ENCODE measurements at regions of chr2 and their contacts with region 1.

Region 1: DNA sequence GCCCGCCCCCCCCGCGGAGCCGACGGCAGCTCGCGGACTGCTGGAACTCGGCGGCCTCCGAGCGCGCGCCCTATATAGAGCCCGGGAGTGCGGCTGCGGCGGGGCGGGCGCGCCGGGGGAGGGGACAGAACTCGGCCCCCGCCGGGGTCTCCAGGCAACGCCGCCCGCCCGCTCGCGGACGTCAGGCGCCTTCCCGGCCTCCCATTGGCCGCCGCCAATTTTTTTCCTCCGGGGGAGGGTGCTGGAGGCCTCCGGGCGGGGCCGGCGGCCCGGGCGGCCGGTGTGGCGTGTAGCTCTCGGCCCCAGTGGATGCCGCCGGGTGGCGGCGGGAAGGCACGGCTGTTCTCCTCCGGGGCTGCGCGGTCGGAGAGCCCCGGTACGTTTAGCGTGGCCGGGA is at the start of gene ZFP36L2:
- DNase-seq: peak; percentile 93 to 98
- H3K4me3 ChIP-seq: peak within 1 kb of the TSS; percentile 87 to 89
- H3K27ac ChIP-seq: peak within 1 kb of the TSS; percentile 96 to 99
- H3K4me1 ChIP-seq: peaks cover 0 to 38% (median 23%) of the 10 kb centered on the region in 4 donors
- H3K27me3 ChIP-seq: no peaks in the 10 kb centered on the region
- CTCF ChIP-seq: no peak

Region 2: DNA sequence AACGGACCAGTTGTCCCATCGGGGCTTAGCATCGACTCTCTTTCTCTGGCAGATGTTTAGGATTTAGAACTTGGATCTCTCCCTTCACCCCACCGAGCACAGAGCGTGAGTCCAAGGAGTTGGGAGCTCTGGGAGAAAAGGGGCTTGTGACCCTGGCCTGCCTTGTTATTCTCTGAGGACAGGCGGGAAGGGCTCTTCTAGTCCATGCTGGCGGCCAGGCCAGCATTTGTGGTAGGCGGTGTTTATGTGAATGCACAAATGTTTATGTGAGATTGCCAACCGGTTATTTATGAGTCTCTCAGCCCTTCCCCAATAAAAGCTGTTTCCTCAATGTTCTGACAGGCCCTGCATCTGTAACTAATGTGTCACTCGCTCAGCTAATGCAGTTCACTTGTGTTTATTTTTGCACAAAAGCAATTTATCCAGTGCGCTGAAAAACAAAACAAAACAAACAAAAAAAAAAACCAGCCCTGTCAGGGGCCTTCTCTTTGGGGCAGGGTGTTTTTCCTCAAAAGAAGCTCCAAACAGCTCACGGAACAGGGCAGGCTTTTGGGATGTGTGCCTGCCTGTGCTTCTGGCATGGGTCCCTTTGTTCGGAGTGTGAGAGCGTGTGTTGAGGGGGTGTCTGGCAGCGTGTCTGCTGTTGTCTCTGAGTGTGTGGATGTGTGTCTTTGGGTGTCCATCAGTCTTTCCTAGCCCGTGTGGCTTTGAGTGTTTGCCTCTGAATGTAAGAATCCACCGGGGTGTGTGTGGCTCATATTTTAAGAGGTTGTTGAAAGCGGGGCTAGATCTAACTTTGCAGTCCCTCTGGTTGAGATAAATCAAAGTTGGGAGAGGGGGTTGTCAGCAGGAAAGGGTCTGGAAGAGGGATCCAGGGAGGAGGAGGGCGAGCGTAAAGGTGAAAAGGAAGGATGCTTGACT is 381.4 kb before region 1 on chr2:
- intact Hi-C with region 1: loop called (anchors 5 kb)
- DNase-seq: peak in 1 of 2 donors; percentile 68
- H3K4me3 ChIP-seq: no peak overlapping the region
- H3K27ac ChIP-seq: peak overlapping the region; percentile 72 to 78
- H3K4me1 ChIP-seq: peaks cover 6 to 94% (median 78%) of the 10 kb centered on the region in 4 donors
- H3K27me3 ChIP-seq: no peaks in the 10 kb centered on the region
- CTCF ChIP-seq: no peak

Region 3: DNA sequence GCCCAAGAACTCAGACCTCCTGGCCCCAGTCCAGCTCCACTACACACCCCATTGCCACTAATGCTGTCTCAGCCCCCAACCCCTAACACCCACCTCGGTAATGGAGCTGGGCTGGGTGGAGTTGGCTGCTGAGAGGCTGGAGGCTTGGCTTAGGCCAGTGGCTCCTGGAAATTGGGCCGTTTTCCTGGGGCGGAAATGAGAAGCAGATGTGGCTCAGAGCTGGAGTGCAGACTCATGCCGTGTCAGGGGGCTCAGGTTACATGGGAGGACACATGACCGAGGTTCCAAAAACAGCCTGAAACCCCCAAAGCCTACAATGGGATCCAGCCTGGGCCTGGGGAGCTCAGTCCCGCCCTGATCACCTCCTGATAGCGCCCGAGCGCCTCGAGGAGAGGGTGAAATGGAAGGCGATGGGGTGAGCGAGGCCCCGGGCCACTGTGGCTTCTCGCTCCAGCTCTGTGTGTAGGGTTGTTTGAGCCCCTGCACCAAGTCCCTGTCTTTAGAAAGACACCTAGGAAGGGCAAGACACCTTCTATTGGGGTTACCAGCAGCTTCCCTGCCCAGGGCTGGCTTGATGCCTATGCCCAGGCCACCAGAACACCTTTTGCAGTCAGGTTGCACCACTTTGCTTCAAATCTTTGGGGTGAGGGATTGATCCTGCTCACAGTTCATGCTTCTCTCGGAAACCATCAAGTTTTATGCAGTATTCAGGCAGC is 258.4 kb before region 1 on chr2:
- intact Hi-C with region 1: loop called (anchors 2 kb)
- DNase-seq: peak; percentile 83 to 88
- H3K4me3 ChIP-seq: no peak overlapping the region
- H3K27ac ChIP-seq: peak overlapping the region; percentile 61 to 84
- H3K4me1 ChIP-seq: peaks cover 0 to 51% (median 21%) of the 10 kb centered on the region in 4 donors
- H3K27me3 ChIP-seq: no peaks in the 10 kb centered on the region
- CTCF ChIP-seq: no peak

Region 4: GRCh38 chr2:43075054-43075593 is 151.4 kb before region 1 on chr2:
- intact Hi-C with region 1: loop called (anchors 10 kb)
- DNase-seq: peak; percentile 89 to 94
- H3K4me3 ChIP-seq: no peak overlapping the region
- H3K27ac ChIP-seq: peak overlapping the region; percentile 77 to 84
- H3K4me1 ChIP-seq: peaks cover 0 to 76% (median 62%) of the 10 kb centered on the region in 4 donors
- H3K27me3 ChIP-seq: no peaks in the 10 kb centered on the region
- CTCF ChIP-seq: no peak

Region 5: DNA sequence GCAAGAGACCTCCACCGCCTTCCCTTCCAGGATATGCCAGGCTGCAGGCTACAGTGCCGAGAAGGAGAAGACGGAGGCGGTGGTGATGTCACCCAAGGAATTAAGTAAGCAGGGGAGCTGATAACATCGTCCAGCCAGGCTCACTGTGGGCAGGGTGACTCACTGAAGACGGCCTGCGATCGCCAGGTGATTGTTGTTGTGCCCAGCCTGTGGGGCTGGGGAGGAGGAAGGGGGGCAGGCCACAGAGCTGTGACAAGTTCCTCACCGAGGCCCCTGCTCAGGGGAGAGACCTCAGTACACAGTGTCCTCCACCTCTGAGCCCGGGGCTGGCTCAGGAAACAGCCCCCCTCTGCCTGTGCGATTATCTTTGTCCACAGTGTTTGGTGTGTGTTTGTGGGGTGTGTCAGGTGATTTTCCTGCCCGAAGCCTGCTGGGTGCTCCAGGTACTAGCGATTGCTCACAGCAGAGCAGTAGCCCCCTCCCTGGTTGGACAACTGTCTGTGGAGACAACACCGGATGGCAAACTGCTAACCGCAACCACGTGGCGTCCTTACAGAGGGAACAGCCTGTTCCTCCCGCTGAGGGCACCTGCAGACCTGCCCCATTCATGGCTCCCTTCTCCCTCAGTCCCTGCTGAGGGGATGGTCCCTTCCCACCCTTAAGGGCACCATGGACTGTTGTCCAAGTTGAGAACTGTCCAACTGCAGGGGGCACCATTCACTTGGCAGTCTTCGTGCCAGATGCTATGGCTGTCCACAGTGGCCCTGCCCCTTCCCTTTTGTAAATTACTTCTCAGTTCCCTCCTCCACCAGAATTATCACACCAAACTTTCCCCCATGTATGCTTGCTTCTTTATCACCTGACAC is 95.3 kb before region 1 on chr2:
- intact Hi-C with region 1: no loop called
- DNase-seq: peak; percentile 78 to 86
- H3K4me3 ChIP-seq: no peak overlapping the region
- H3K27ac ChIP-seq: peak overlapping the region; percentile 15 to 42
- H3K4me1 ChIP-seq: peaks cover 8 to 41% (median 24%) of the 10 kb centered on the region in 4 donors
- H3K27me3 ChIP-seq: no peaks in the 10 kb centered on the region
- CTCF ChIP-seq: peak; percentile 30 to 35

Region 6: DNA sequence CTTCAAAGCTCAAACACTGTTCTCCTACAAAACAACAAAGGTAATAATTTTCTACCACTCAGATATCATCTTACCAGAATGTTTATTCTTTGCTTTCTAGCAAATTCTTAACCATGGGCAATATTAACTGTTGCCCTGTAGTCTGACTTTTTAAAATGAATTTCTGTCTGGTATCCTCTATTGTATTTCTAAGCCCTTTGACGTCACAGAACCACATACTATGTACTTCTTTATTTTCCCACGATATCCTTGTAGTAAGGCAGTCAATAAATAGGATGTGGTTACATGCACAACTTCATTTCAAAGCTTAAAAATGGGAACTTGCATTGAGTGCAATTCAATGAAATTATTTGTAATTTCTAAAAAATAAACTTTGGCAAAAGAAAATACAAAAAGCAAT is 310.6 kb after region 1 on chr2:
- intact Hi-C with region 1: loop called (anchors 5 kb)
- DNase-seq: no peak
- H3K4me3 ChIP-seq: no peak overlapping the region
- H3K27ac ChIP-seq: peak overlapping the region; percentile 82
- H3K4me1 ChIP-seq: peaks cover 0 to 50% (median 24%) of the 10 kb centered on the region in 4 donors
- H3K27me3 ChIP-seq: no peaks in the 10 kb centered on the region
- CTCF ChIP-seq: no peak